CD4-positive, alpha-beta T cell (primary cell): ENCODE measurements at regions of chr1 and their contacts with region 1.

Region 1: DNA sequence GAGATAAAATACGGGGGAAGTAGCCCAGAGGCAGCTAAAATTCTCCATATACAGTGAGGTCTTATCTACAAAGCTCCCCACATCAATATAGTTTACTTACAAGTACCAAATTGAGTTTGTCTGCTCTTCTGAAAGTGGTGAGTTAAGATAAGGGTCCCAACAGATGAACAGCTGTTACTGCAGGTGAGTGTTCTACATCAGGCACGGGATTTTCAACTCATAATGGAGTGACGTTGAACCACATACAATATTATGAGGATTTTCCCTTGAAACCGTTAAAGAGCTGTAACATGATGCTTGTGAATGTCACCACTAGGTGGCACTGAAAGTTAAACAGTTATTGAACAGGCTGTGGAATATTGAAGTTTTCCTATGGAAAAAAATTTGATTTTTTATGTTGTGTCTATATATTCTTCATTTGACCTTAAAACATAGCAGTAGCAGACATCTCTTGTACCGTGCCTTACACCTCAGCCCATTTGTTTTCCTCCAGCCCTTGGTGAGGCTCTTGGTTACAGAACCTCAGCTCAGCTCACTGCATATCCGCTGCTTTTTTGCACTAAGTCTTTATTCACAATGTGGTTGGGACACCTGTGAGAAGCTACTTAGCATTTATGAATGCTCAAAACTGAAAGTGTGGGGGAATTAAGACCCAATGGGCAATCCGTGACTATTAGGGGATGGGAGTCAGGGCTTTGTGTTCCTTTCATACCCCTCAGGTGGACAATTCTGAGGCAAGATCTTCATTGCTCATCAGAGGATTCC is 23.2 kb downstream of the CD1D start:
- DNase-seq: peak in 4 of 14 experiments; percentile 22 to 71 (median 56)
- ATAC-seq: peak; percentile 54
- H3K4me3 ChIP-seq: no peak overlapping the region
- H3K4me3 Mint-ChIP-seq: no peak overlapping the region
- H3K27ac ChIP-seq: no peak overlapping the region
- H3K27ac Mint-ChIP-seq: no peak overlapping the region
- H3K4me1 ChIP-seq: peaks cover 4% of the 10 kb centered on the region
- H3K4me1 Mint-ChIP-seq: peaks cover 18% of the 10 kb centered on the region
- H3K27me3 ChIP-seq: peaks cover 2 to 6% of the 10 kb centered on the region in 2 experiments
- H3K27me3 Mint-ChIP-seq: peaks cover 17% of the 10 kb centered on the region
- CTCF ChIP-seq: peak; percentile 95

Region 2: GRCh38 chr1:158180741-158181576 is 22.9 kb before region 1 on chr1 and contains the start of gene CD1D:
- CTCF ChIA-PET with region 1: no interaction called
- POLR2A ChIA-PET with region 1: no interaction called
- intact Hi-C with region 1: no loop called
- DNase-seq: peak in 2 of 14 experiments; percentile 19 to 20
- ATAC-seq: no peak
- H3K4me3 ChIP-seq: peak within 1 kb of the TSS; percentile 47
- H3K4me3 Mint-ChIP-seq: peak within 1 kb of the TSS; percentile 69
- H3K27ac ChIP-seq: no peak within 1 kb of the TSS
- H3K27ac Mint-ChIP-seq: no peak within 1 kb of the TSS
- H3K4me1 ChIP-seq: peaks cover 10% of the 10 kb centered on the region
- H3K4me1 Mint-ChIP-seq: peaks cover 21% of the 10 kb centered on the region
- H3K27me3 ChIP-seq: peaks cover 44 to 50% of the 10 kb centered on the region in 2 experiments
- H3K27me3 Mint-ChIP-seq: peaks cover 74% of the 10 kb centered on the region
- CTCF ChIP-seq: no peak
- total RNA-seq, gene CD1D: 0.11 to 0.14 TPM

Region 3: DNA sequence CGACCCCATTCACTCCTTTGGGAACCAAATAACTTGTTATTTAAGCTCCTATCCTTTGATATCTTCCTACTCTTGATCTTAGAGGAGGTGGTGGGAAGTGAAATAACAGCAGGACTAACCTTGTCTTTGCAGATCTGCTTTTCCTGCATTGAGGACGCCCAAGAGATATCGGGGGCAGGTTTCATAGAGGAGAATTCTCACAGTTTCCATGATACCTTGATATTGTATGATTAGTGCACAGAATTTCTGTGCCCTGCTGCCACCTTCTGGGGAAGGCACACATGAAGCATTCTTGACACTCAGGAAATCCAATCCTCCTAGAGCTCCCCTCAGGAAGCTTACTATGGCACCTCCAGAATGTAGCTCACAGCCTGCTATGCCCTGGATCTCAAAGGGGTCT is 125.9 kb after region 1 on chr1:
- CTCF ChIA-PET with region 1: interaction called, 3 read pairs
- POLR2A ChIA-PET with region 1: no interaction called
- intact Hi-C with region 1: loop called in 1 of 2 experiments (anchors 10 kb)
- DNase-seq: peak in 4 of 14 experiments; percentile 13 to 35 (median 20)
- ATAC-seq: no peak
- H3K4me3 ChIP-seq: no peak overlapping the region
- H3K4me3 Mint-ChIP-seq: no peak overlapping the region
- H3K27ac ChIP-seq: no peak overlapping the region
- H3K27ac Mint-ChIP-seq: no peak overlapping the region
- H3K4me1 ChIP-seq: peaks cover 2% of the 10 kb centered on the region
- H3K4me1 Mint-ChIP-seq: peaks cover 16% of the 10 kb centered on the region
- H3K27me3 ChIP-seq: peaks cover 0 to 17% of the 10 kb centered on the region in 2 experiments
- H3K27me3 Mint-ChIP-seq: peaks cover 17% of the 10 kb centered on the region
- CTCF ChIP-seq: peak; percentile 14

Region 4: DNA sequence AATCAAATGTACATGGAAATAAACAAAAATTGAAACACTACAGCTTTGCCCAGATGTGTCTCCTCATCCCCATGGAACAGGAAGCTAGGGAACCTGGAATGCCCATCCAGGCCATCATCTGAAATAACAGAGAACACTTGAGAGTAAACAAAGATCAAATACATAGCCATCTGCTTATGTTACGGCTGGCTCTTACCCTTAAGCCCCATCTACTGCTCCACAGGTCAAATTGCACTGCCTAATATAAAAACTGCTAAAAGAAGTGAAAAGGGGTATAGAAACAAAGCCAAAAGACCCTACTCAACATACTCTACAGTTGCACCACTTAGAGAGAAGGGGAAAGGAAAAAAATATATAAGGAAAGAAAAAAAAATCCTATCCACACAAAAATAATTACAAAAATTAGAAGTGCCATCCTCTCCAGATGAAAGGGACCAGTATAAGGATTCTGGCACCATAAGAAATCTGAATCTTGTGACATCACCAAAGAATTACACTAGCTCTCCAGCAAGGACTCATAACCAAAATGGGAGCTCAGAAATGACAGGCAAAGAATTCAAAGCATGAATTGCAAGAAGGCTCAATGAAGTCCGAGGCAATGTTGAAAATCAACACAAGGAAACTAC is 323.4 kb after region 1 on chr1:
- CTCF ChIA-PET with region 1: no interaction called
- POLR2A ChIA-PET with region 1: no interaction called
- intact Hi-C with region 1: loop called in 1 of 2 experiments (anchors 2 kb)
- DNase-seq: peak in 3 of 14 experiments; percentile 14 to 64 (median 42)
- ATAC-seq: no peak
- H3K4me3 ChIP-seq: no peak overlapping the region
- H3K4me3 Mint-ChIP-seq: no peak overlapping the region
- H3K27ac ChIP-seq: no peak overlapping the region
- H3K27ac Mint-ChIP-seq: no peak overlapping the region
- H3K4me1 ChIP-seq: no peaks in the 10 kb centered on the region
- H3K4me1 Mint-ChIP-seq: no peaks in the 10 kb centered on the region
- H3K27me3 ChIP-seq: no peaks in the 10 kb centered on the region
- H3K27me3 Mint-ChIP-seq: peaks cover 35% of the 10 kb centered on the region
- CTCF ChIP-seq: peak; percentile 47

Region 5: GRCh38 chr1:159214149-159214760 is 1010.4 kb after region 1 on chr1:
- CTCF ChIA-PET with region 1: no interaction called
- POLR2A ChIA-PET with region 1: no interaction called
- intact Hi-C with region 1: loop called in 1 of 2 experiments (anchors 5 kb)
- DNase-seq: peak in 10 of 14 experiments; percentile 4 to 62 (median 16)
- ATAC-seq: no peak
- H3K4me3 ChIP-seq: no peak overlapping the region
- H3K4me3 Mint-ChIP-seq: no peak overlapping the region
- H3K27ac ChIP-seq: no peak overlapping the region
- H3K27ac Mint-ChIP-seq: no peak overlapping the region
- H3K4me1 ChIP-seq: no peaks in the 10 kb centered on the region
- H3K4me1 Mint-ChIP-seq: no peaks in the 10 kb centered on the region
- H3K27me3 ChIP-seq: peaks cover 5 to 9% of the 10 kb centered on the region in 2 experiments
- H3K27me3 Mint-ChIP-seq: peaks cover 73% of the 10 kb centered on the region
- CTCF ChIP-seq: peak; percentile 98